GM23248 (cell line): ENCODE measurements at regions of chr7 and their contacts with region 1.

Region 1: DNA sequence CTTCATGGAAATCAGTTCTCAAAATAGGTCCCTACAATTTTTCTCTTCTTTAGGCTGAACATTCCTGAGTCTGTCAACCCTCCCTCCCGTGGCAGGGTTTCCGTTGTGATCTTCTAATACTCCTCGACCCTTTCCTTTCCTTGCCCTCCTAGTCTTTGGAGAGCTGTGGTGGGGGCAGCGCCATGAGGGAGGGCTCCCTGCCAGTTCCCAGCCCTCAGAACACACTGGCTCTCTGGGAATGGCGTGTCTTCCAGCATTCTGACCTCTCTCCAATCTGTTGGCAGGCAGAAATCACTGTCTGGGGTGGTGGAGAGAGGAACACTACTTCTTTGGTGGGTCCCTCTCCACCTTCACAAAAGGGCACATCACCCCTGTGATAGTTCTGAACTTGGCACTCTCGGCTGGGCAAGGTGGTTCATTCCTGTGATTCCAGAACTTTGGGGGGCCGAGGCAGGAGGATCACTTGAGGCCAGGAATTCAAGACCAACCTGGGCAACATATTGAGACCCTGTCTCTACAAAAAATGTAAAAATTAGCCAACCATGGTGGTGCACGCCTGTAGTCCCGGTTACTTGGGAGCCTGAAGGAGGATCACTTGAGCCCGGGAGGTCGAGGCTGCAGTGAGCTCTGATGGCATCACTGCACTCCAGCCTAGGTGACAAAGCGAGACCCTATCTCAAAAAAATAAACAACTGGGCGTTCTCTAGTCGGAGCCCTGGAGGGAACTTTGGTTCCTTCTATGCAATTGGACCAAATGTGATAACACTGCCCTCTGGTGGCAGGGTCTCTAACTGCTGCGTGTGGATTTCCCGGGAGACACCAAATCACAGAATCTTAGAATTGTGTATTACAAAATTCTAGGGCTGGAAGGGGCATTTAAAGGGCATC is 13.1 kb upstream of the ARPC1A start:
- DNase-seq: peak; percentile 70
- H3K4me3 ChIP-seq: no peak overlapping the region
- H3K27ac ChIP-seq: no peak overlapping the region
- H3K4me1 ChIP-seq: no peaks in the 10 kb centered on the region
- H3K27me3 ChIP-seq: no peaks in the 10 kb centered on the region

Region 2: GRCh38 chr7:99040104-99040958 is 272.2 kb before region 1 on chr7:
- in situ Hi-C with region 1: loop called (anchors 5 kb)
- DNase-seq: peak; percentile 88
- H3K4me3 ChIP-seq: no peak overlapping the region
- H3K27ac ChIP-seq: peak overlapping the region; percentile 21; the same call in 1 of the 2 replicates
- H3K4me1 ChIP-seq: 0 out of 2 replicates have a peak, but pooled peaks cover 3% of the 10 kb centered on the region
- H3K27me3 ChIP-seq: no peaks in the 10 kb centered on the region

Region 3: DNA sequence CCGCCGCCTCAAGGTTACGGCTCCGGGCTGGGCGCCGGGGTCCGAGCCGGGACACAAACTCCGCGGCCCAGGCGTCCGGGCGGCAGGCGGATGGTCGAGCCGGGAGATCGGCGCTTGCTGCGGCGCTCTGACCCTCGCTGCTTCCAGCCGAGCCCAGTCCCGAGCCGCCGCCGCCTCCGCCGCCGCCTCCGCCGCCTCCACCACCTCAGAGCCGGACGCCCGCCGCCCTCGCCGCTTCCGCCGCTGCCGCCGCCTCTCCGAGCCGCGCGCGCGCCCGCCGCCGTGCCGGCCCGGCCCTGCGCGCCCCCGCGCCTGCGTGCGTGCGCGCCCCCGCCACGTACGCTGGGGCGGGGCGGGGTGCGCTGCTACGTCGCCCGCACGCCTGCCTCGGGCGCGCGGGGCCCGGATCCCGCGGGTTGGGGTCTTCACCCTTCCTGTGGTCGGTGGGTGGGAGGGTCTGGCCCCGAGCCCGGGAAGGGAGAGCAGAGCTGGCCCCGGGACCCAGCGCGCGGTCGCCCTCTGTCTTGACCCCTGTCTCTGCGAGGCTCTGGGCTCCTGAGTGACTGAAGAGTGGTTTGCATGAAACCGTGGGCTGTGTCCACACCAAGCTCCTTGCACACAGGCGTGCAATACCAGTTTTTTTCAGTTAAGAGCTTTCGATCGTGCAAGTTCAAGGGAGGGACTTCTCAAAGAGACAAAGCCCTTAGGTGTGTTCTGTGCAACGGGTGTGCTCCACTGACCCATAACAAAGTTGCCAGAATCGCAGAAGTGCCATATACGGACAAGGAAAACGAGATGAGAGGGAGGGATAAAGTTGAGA is 168.5 kb before region 1 on chr7 and contains the start of gene SMURF1:
- in situ Hi-C with region 1: loop called (anchors 10 kb)
- DNase-seq: peak; percentile 89
- H3K4me3 ChIP-seq: peak within 1 kb of the TSS; percentile 84
- H3K27ac ChIP-seq: peak within 1 kb of the TSS; percentile 91
- H3K4me1 ChIP-seq: peaks cover 21% of the 10 kb centered on the region
- H3K27me3 ChIP-seq: no peaks in the 10 kb centered on the region
- total RNA-seq, gene SMURF1: 19.1 and 21.1 TPM in 2 replicates

Region 4: GRCh38 chr7:99447943-99448342 is 135.4 kb after region 1 on chr7:
- in situ Hi-C with region 1: no loop called
- DNase-seq: no peak
- H3K4me3 ChIP-seq: no peak overlapping the region
- H3K27ac ChIP-seq: no peak overlapping the region
- H3K4me1 ChIP-seq: no peaks in the 10 kb centered on the region
- H3K27me3 ChIP-seq: no peaks in the 10 kb centered on the region